Activated CD4-positive, alpha-beta T cell treated with anti-CD3 and anti-CD28 coated beads for 36 hours (primary cell): ENCODE measurements at regions of chr20 and their contacts with region 1.

Region 1: GRCh38 chr20:63178889-63179686 is 36.8 kb downstream of the YTHDF1 start:
- DNase-seq: peak; percentile 82
- ATAC-seq: peak; percentile 67
- H3K4me3 Mint-ChIP-seq: no peak overlapping the region
- H3K27ac Mint-ChIP-seq: no peak overlapping the region
- H3K4me1 Mint-ChIP-seq: peaks cover 12% of the 10 kb centered on the region
- H3K27me3 Mint-ChIP-seq: peaks cover 31% of the 10 kb centered on the region

Region 2: DNA sequence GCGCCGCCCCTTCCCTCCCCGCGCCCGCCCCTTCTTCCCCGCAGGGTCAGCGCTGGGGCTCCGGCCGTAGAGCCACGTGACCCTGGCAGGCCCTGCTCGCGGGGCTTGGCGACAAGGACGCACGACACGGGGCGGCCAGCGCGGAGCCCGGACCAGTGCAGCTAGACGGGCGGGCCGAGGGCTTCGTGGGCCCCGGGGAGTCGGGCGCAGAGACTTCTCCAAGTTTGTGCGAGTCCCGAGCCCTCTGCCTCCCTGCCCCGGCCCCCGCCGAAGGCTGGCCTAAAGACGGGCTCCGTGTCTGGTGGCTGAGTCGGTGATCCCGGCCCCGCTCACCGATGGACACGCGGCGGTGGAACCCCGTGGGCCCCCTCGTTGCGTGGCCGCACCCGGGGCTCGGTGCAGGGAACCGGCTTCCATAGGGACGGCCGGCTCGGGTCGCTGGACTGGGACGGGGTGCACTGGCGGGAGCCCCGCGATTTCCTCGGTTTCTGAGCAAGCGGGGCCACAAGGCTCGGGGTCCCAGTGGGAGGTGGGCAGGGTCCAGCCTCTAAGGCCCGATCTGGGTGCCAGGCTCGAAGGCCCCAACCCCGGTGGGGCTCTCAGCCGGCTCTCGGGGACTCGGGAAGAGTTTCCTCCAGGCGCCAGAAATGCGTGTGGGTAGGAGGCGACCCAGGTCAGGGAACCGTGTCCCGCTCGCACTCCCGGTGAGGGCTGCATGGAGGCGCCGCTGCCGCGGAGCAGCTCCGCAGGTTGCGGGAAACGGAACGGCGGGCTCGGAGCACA is 702.8 kb before region 1 on chr20:
- CTCF ChIA-PET with region 1: no interaction called
- POLR2A ChIA-PET with region 1: no interaction called
- intact Hi-C with region 1: loop called in 1 of 2 experiments (anchors 10 kb)
- DNase-seq: peak; percentile 27
- ATAC-seq: peak; percentile 12
- H3K4me3 Mint-ChIP-seq: no peak overlapping the region
- H3K27ac Mint-ChIP-seq: no peak overlapping the region
- H3K4me1 Mint-ChIP-seq: no peaks in the 10 kb centered on the region
- H3K27me3 Mint-ChIP-seq: peaks cover 34% of the 10 kb centered on the region

Region 3: GRCh38 chr20:62972270-62973032 is 206.6 kb before region 1 on chr20:
- CTCF ChIA-PET with region 1: no interaction called
- POLR2A ChIA-PET with region 1: no interaction called
- intact Hi-C with region 1: loop called in 1 of 2 experiments (anchors 1 kb)
- DNase-seq: peak; percentile 93
- ATAC-seq: peak; percentile 99
- H3K4me3 Mint-ChIP-seq: peak overlapping the region; percentile 4
- H3K27ac Mint-ChIP-seq: no peak overlapping the region
- H3K4me1 Mint-ChIP-seq: peaks cover 19% of the 10 kb centered on the region
- H3K27me3 Mint-ChIP-seq: peaks cover 37% of the 10 kb centered on the region

Region 4: DNA sequence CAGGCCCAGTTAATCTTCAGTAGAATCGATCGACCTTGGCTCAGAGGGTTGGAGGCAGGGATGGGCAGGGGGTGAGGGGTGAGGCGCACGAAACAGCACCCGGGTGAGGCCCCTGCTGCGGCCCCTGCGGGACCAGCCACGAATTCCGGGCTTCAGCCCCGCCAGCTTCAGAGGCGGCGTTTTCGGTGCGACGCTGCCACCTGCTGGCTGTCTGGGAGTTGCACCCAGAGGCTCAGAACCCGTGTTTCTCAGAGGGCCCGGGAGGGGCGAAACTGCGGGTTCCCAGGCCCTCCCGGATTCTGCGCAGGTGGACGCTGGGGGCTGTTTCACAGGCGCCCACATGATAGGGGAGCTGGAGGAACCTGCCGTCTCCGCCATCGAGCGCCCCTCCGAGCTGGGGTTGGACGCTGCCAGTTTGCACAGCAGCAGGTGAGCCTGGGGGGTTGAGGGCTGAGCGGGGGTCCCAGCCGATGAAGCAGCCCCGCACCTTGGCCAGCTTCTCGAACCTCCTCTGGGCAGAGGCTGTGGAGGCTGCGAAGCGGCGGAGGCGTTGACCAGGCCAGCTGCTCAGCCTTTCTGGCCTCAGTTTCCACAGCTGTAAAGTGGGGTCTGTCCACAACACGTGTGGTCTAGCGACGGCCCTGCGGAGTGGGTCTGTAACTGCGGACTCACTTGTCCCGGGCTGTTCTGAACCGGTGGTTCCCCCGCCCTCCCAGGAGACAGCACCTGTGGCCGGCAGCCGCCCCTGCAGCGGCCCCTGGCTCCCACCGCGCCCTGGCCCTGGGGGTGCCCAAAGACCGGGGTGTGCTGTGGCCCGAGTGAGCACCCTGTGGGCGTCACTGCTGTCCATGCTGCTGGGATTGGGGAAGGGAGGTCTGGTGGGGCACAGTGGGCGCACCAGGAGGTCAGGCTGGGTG is 169.8 kb before region 1 on chr20:
- CTCF ChIA-PET with region 1: no interaction called
- POLR2A ChIA-PET with region 1: no interaction called
- intact Hi-C with region 1: loop called in 1 of 2 experiments (anchors 2 kb)
- DNase-seq: peak; percentile 90
- ATAC-seq: peak; percentile 82
- H3K4me3 Mint-ChIP-seq: no peak overlapping the region
- H3K27ac Mint-ChIP-seq: no peak overlapping the region
- H3K4me1 Mint-ChIP-seq: peaks cover 21% of the 10 kb centered on the region
- H3K27me3 Mint-ChIP-seq: peaks cover 42% of the 10 kb centered on the region

Region 5: DNA sequence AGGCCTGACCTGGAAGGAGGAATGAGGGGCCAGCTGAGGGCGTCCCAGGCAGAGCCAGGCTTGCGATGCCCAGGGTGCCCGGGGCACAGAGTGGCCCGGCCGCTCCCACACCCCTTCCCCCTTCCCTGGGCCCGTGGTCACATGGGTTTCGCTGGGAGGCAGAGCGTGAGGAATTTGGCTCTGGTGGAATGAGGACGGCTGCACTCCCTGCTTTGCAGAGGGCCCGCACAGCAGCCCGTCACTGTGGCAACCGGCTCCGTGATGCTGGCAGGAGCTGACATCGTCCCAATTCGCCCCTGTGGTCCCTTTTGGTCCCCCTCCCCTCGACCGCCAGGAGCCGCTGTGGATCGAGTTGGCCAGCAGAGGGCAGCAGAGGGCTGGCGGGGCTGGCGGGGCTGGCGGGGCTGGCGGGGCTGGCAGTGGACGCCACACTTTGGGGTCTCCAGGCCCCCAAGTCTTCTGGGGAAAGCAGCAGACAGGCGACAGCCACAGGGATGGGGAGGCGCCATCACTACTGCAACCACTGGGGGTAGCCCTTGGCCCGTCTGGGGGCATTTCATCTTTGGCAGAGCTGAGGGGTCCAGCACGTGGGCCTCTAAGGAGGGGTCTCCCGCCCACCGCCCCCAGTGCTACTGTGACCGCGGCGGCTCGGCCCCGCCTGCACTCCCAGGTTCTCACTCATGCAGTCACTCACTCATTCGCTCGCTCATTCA is 122.7 kb before region 1 on chr20:
- CTCF ChIA-PET with region 1: no interaction called
- POLR2A ChIA-PET with region 1: no interaction called
- intact Hi-C with region 1: loop called (anchors 1 to 2 kb)
- DNase-seq: peak; percentile 71
- ATAC-seq: peak; percentile 71
- H3K4me3 Mint-ChIP-seq: no peak overlapping the region
- H3K27ac Mint-ChIP-seq: no peak overlapping the region
- H3K4me1 Mint-ChIP-seq: no peaks in the 10 kb centered on the region
- H3K27me3 Mint-ChIP-seq: peaks cover 16% of the 10 kb centered on the region

Region 6: DNA sequence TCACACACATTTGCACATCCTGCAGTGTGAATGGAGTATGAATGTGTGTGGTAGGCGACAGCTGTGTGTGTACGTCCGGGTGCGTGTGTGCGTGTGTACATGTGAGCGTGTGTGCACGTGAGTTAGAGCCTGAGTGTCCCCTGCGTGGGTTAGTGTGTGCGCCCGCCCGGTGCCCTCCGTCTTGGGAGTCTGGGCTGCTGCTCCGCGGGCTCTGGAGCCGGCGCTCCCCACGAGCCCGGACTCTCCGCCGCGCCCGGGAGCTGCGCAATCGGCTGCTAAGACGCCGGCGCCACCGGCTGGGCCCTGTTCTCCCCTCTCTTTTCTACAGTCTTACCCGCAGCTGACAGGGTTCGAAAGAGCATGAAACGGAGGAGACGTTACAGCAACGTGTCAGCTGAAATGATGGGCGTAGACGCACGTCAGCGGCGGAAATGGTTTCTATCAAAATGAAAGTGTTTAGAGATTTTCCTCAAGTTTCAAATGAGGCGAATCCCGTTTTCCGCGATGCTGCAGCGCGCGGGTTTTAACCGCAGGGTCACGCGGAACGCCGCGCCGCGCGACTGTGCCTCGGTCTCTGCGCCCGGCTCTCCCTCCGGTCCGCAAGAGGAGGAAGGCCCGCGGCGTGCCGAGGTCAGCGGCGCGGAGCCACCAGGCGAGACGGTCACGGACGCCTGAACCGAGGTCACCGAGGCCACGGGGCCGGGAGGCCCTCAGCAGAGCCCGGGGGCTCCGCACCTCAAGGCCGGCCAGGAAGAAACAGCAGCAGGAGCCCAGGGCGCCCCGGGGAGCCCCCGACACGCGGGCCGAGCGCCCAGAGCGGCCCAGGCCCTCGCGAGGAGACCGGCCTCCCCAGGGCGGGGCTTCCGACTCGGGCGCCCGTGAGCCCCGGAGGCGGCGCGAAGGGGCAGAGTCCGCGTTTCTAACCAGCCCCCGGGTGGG is 77.0 kb before region 1 on chr20:
- CTCF ChIA-PET with region 1: no interaction called
- POLR2A ChIA-PET with region 1: no interaction called
- intact Hi-C with region 1: loop called in 1 of 2 experiments (anchors 1 kb)
- DNase-seq: peak; percentile 85
- ATAC-seq: peak; percentile 74
- H3K4me3 Mint-ChIP-seq: peak overlapping the region; percentile 77
- H3K27ac Mint-ChIP-seq: peak overlapping the region; percentile 87
- H3K4me1 Mint-ChIP-seq: peaks cover 5% of the 10 kb centered on the region
- H3K27me3 Mint-ChIP-seq: no peaks in the 10 kb centered on the region

Region 7: GRCh38 chr20:63381807-63382322 is 202.8 kb after region 1 on chr20:
- CTCF ChIA-PET with region 1: no interaction called
- POLR2A ChIA-PET with region 1: no interaction called
- intact Hi-C with region 1: loop called in 1 of 2 experiments (anchors 1 kb)
- DNase-seq: peak; percentile 59
- ATAC-seq: peak; percentile 58
- H3K4me3 Mint-ChIP-seq: no peak overlapping the region
- H3K27ac Mint-ChIP-seq: no peak overlapping the region
- H3K4me1 Mint-ChIP-seq: no peaks in the 10 kb centered on the region
- H3K27me3 Mint-ChIP-seq: peaks cover 13% of the 10 kb centered on the region